Gastrocnemius medialis (tissue), 4 donors: ENCODE measurements at regions of chr19 and their contacts with region 1.

Region 1: GRCh38 chr19:506404-507285 is 652 bp upstream of the TPGS1 start:
- DNase-seq: peak; percentile 99
- ATAC-seq: peak; percentile 94 to 96
- H3K4me3 ChIP-seq: peak overlapping the region; percentile 88 to 100 (median 96)
- H3K27ac ChIP-seq: peak overlapping the region; percentile 90 to 99 (median 91)
- H3K4me1 ChIP-seq: peaks cover 14 to 25% of the 10 kb centered on the region in 2 donors
- H3K27me3 ChIP-seq: no peaks in the 10 kb centered on the region
- CTCF ChIP-seq: peak; percentile 93 to 97 (median 96)
- POLR2A ChIP-seq: no peak

Region 2: GRCh38 chr19:383922-384798 is 122.5 kb before region 1 on chr19:
- in situ Hi-C with region 1: no loop called
- intact Hi-C with region 1: loop called (anchors 2 kb)
- DNase-seq: no peak
- ATAC-seq: no peak
- H3K4me3 ChIP-seq: no peak overlapping the region
- H3K27ac ChIP-seq: no peak overlapping the region
- H3K4me1 ChIP-seq: no peaks in the 10 kb centered on the region
- H3K27me3 ChIP-seq: peaks cover 13 to 23% (median 18%) of the 10 kb centered on the region in 3 donors
- CTCF ChIP-seq: peak; percentile 35 to 55 (median 54)
- POLR2A ChIP-seq: no peak

Region 3: DNA sequence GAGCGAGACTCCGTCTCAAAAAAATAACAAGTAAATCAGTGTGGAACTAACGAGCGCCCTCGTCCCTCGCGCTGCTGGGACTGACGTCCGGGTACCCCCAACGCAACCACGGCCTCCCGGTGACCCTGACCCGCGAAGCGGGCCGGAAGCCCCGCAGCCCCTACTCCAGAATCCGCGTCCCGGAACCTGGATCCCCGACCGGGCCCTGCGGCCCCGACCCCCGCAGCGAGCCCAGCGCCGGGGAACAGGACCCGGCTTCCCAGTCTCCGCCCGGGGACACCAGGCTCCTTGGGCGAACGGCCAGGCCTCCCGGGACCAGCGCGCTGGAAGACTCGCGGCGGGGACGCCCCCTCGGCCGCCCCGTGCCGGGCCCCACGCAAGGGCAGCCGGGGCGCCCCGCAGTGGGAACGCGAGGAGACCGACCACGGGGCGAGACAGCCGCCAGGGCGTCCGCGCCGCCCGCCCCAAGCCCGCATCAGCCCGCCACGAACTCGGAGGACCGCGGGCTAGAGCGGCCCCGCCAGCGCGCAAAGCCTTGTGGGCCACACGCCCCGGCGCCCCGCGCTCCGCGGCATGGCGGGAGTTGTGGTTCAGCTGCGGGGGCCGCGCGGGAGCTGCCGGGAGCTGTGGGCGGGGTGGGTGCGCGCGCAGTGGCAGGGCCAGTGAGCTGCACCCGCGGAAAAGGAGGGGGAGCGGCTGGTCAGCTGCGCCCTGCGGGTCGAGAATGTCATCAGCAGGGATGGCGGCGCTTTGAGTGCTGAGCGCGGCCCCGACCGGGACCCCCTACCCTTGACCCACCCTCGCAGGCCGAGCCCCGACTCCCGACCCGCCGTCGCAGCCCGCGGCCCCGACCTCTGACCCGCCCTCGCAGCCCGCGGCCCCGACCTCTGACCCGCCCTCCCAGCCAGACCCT is 17.9 kb before region 1 on chr19:
- in situ Hi-C with region 1: no loop called
- intact Hi-C with region 1: loop called (anchors 1 kb)
- DNase-seq: peak; percentile 87 to 95
- ATAC-seq: peak; percentile 92
- H3K4me3 ChIP-seq: peak overlapping the region; percentile 76 to 93 (median 84)
- H3K27ac ChIP-seq: peak overlapping the region; percentile 79 to 94 (median 92)
- H3K4me1 ChIP-seq: peaks cover 6 to 7% of the 10 kb centered on the region in 2 donors
- H3K27me3 ChIP-seq: peaks cover 10 to 21% (median 14%) of the 10 kb centered on the region in 3 donors
- CTCF ChIP-seq: peak in 1 of 5 experiments; percentile 31
- POLR2A ChIP-seq: peak; percentile 69 to 83

Region 4: GRCh38 chr19:633068-633785 is 126.6 kb after region 1 on chr19 and contains the start of gene POLRMT:
- in situ Hi-C with region 1: no loop called
- intact Hi-C with region 1: loop called (anchors 5 kb)
- DNase-seq: peak; percentile 98 to 99
- ATAC-seq: peak; percentile 100
- H3K4me3 ChIP-seq: peak within 1 kb of the TSS; percentile 75 to 99 (median 88)
- H3K27ac ChIP-seq: peak within 1 kb of the TSS; percentile 81 to 91 (median 86)
- H3K4me1 ChIP-seq: peaks cover 10 to 25% of the 10 kb centered on the region in 2 donors
- H3K27me3 ChIP-seq: no peaks in the 10 kb centered on the region
- CTCF ChIP-seq: peak in 1 of 5 experiments; percentile 25
- POLR2A ChIP-seq: peak; percentile 62 to 80
- total RNA-seq, gene POLRMT: 43.9 to 83.4 (median 73.8) TPM